ENCODE measurements at regions of chr14 and their contacts with region 1.

Region 1: DNA sequence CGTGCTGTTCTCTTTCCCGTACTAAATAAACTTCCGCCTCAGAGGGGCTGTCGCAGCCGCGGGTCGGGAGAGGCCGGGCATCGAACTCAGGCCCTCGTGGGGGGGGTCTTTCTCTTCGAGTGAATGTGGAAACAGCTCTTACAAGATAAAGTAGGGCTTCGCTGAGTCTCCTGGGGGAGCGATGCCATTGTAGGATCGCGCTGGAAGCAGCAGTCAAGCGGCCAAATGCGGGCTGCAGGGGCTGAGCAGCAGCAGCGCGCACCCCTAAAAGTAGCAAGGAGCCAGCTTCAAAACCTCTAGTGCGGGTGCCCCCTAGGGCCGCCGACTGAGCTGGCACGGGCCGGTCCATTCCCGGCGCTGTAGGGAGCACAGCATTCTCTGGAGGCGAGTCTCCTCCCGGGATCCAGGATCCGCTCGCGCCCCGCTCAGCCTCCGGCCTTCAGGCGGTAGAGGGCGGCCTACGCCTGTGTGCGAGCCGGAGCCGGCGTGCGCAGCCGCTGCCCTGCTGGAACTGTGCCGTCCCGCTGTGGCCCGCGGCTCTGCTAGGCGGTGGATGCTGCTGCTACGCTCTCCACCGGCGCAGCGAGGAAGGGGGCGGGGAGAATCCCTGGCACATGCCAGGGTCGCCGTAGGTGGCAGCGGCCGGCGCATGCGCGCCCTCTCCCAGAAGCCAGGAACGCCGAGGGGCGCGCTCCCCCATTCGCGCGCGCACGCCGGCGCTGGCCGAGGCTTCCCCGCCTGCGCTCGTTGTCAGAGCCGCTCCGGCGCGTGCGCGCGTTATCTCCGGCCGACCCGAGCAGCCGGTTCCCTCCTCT is at the start of gene FUT8:
- DNase-seq: peak; percentile 87 to 98 (median 96)
- ATAC-seq: peak; percentile 88
- H3K4me3 ChIP-seq: peak within 1 kb of the TSS; percentile 95 to 98
- H3K4me3 Mint-ChIP-seq: peak within 1 kb of the TSS; percentile 99
- H3K27ac ChIP-seq: peak within 1 kb of the TSS; percentile 75 to 86
- H3K27ac Mint-ChIP-seq: peak within 1 kb of the TSS; percentile 98
- H3K4me1 ChIP-seq: peaks cover 11% of the 10 kb centered on the region
- H3K4me1 Mint-ChIP-seq: peaks cover 43% of the 10 kb centered on the region
- H3K27me3 ChIP-seq: no peaks in the 10 kb centered on the region
- H3K27me3 Mint-ChIP-seq: no peaks in the 10 kb centered on the region
- CTCF ChIP-seq: peak; percentile 43
- total RNA-seq, gene FUT8: 38.3 to 38.5 TPM

Region 2: DNA sequence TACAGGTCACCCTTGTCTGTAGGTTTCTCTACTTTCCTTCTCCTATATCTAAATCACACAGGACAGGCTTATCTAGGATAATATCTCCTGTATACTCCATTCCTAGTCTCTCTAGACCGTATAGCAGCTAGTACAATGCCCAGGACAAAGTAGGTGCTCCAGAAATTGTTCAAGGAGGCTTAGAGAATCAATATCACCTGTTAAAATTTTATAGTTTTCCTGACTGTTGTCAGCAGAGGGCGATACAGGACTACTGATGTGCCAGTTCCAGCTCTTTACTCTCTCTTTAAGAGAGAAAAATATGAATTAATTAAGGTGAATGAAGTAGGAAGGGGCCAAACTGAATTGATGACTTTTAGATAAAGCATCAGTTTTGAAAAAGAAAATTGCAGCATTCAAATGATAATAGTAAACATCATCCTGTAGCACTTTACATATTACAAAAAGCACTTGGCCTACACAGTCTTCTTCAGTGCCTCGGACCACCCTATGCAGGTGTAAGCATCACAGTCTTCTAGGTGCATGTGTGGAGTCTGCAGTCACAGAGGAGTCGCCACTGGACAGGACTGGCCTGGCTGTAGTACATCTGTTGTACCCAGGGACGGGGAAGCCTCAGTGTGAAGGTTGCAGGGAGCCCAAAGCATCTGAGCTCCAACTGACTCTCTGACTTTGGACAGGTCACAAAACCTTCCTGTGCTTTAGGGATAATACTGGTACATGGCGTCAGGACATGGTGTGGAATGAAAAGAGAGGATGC is 248.0 kb before region 1 on chr14:
- CTCF ChIA-PET with region 1: interaction called, 44 read pairs
- POLR2A ChIA-PET with region 1: interaction called, 8 read pairs
- intact Hi-C with region 1: loop called (anchors 2 to 5 kb)
- DNase-seq: peak in 6 of 9 experiments; percentile 5 to 69 (median 37)
- ATAC-seq: peak; percentile 48
- H3K4me3 ChIP-seq: no peak overlapping the region
- H3K4me3 Mint-ChIP-seq: no peak overlapping the region
- H3K27ac ChIP-seq: no peak overlapping the region
- H3K27ac Mint-ChIP-seq: no peak overlapping the region
- H3K4me1 ChIP-seq: no peaks in the 10 kb centered on the region
- H3K4me1 Mint-ChIP-seq: no peaks in the 10 kb centered on the region
- H3K27me3 ChIP-seq: no peaks in the 10 kb centered on the region
- H3K27me3 Mint-ChIP-seq: no peaks in the 10 kb centered on the region
- CTCF ChIP-seq: peak; percentile 76

Region 3: GRCh38 chr14:65255536-65256461 is 156.4 kb before region 1 on chr14:
- CTCF ChIA-PET with region 1: interaction called, 29 read pairs
- POLR2A ChIA-PET with region 1: interaction called, 20 read pairs
- intact Hi-C with region 1: loop called in 1 of 2 experiments (anchors 1 kb)
- DNase-seq: peak in 5 of 9 experiments; percentile 11 to 48 (median 17)
- ATAC-seq: peak; percentile 54
- H3K4me3 ChIP-seq: no peak overlapping the region
- H3K4me3 Mint-ChIP-seq: no peak overlapping the region
- H3K27ac ChIP-seq: no peak overlapping the region
- H3K27ac Mint-ChIP-seq: no peak overlapping the region
- H3K4me1 ChIP-seq: peaks cover 7% of the 10 kb centered on the region
- H3K4me1 Mint-ChIP-seq: peaks cover 30% of the 10 kb centered on the region
- H3K27me3 ChIP-seq: no peaks in the 10 kb centered on the region
- H3K27me3 Mint-ChIP-seq: no peaks in the 10 kb centered on the region
- CTCF ChIP-seq: no peak

Region 4: DNA sequence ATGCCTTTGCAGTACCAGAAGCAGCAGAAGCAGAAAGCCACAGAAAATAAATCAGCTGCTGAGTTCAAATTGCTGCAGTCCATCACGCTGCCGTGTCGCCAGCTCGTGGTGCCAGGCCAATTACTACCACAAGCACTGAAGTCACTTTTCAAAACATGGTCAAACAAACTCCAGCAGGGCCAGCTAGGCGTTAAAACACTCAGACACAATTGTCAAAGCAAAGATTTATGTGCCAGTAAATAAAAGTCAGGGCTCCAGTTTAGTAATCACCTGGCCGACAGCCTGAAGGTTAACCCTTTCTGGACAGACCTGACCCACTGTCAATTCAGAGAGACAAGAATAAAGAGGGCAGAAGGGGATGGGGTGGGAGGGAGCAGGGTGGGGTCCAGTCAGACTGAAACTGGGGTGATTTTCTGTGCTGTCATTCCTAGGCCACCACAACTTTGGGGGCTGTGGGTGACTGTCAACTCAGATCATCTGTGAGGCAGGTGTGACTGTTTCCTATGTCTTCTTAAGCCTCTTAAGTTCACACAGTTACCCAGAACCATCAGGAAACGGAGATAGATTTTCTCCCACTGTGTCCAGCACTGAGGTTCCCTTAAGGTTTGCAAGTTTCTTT is 109.6 kb before region 1 on chr14:
- CTCF ChIA-PET with region 1: no interaction called
- POLR2A ChIA-PET with region 1: interaction called, 13 read pairs
- intact Hi-C with region 1: no loop called
- DNase-seq: peak in 2 of 9 experiments; percentile 29 to 50
- ATAC-seq: peak; percentile 64
- H3K4me3 ChIP-seq: no peak overlapping the region
- H3K4me3 Mint-ChIP-seq: peak overlapping the region; percentile 37
- H3K27ac ChIP-seq: no peak overlapping the region
- H3K27ac Mint-ChIP-seq: peak overlapping the region; percentile 77
- H3K4me1 ChIP-seq: peaks cover 37% of the 10 kb centered on the region
- H3K4me1 Mint-ChIP-seq: peaks cover 62% of the 10 kb centered on the region
- H3K27me3 ChIP-seq: no peaks in the 10 kb centered on the region
- H3K27me3 Mint-ChIP-seq: no peaks in the 10 kb centered on the region
- CTCF ChIP-seq: no peak

Region 5: GRCh38 chr14:65824285-65824977 is 412.2 kb after region 1 on chr14:
- CTCF ChIA-PET with region 1: interaction called, 63 read pairs
- POLR2A ChIA-PET with region 1: interaction called, 4 read pairs
- intact Hi-C with region 1: loop called (anchors 1 to 5 kb)
- DNase-seq: peak; percentile 27 to 80 (median 59)
- ATAC-seq: peak; percentile 98
- H3K4me3 ChIP-seq: no peak overlapping the region
- H3K4me3 Mint-ChIP-seq: no peak overlapping the region
- H3K27ac ChIP-seq: no peak overlapping the region
- H3K27ac Mint-ChIP-seq: no peak overlapping the region
- H3K4me1 ChIP-seq: peaks cover 4% of the 10 kb centered on the region
- H3K4me1 Mint-ChIP-seq: peaks cover 15% of the 10 kb centered on the region
- H3K27me3 ChIP-seq: no peaks in the 10 kb centered on the region
- H3K27me3 Mint-ChIP-seq: no peaks in the 10 kb centered on the region
- CTCF ChIP-seq: peak; percentile 96

Region 6: DNA sequence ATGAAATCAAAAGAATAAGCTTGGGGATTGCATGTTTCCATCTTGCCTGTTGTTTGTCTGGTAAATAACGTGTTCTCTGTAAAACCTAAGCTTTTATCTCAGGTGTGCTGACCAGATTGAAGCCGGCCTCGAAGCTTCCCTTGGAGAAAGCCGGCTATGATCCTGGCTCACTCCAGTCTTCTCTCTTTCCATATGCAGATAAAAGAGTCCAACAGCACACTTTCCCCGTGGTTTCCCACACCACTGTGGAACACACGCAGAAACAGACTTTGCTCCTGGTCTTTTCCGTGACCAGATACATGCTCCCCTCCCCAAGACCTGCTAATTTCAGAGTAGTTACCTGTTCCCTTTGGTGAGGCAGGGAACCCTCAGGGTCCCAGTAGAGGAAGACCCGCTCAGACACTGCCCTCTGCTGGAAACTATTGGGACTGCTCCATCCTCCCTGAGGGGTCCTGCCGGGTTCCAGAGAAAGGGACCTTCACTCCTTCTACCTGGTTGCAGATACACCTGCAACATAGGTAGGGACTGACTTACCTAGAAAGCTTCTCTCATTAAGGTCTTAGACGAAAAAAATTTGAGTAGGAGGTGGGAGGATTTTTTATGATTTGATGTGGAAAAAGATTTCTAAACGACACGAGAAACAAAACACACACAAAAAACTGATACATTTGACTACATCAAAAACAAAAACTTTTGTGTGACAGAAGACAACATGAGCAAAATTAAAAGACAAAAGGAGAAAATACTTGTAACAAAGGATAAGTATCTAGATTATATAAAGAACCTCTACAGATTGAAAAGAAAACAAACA is 658.5 kb after region 1 on chr14:
- CTCF ChIA-PET with region 1: interaction called, 122 read pairs
- POLR2A ChIA-PET with region 1: interaction called, 4 read pairs
- intact Hi-C with region 1: loop called (anchors 1 to 2 kb)
- DNase-seq: peak; percentile 47 to 86 (median 73)
- ATAC-seq: peak; percentile 89
- H3K4me3 ChIP-seq: no peak overlapping the region
- H3K4me3 Mint-ChIP-seq: no peak overlapping the region
- H3K27ac ChIP-seq: no peak overlapping the region
- H3K27ac Mint-ChIP-seq: no peak overlapping the region
- H3K4me1 ChIP-seq: no peaks in the 10 kb centered on the region
- H3K4me1 Mint-ChIP-seq: peaks cover 2% of the 10 kb centered on the region
- H3K27me3 ChIP-seq: no peaks in the 10 kb centered on the region
- H3K27me3 Mint-ChIP-seq: no peaks in the 10 kb centered on the region
- CTCF ChIP-seq: peak; percentile 99

Region 7: GRCh38 chr14:67240978-67241414 is 1828.8 kb after region 1 on chr14:
- CTCF ChIA-PET with region 1: no interaction called
- POLR2A ChIA-PET with region 1: no interaction called
- intact Hi-C with region 1: loop called in 1 of 2 experiments (anchors 2 kb)
- DNase-seq: peak; percentile 81 to 96 (median 91)
- ATAC-seq: peak; percentile 93
- H3K4me3 ChIP-seq: peak overlapping the region; percentile 65 to 76
- H3K4me3 Mint-ChIP-seq: peak overlapping the region; percentile 91
- H3K27ac ChIP-seq: peak overlapping the region; percentile 62
- H3K27ac Mint-ChIP-seq: peak overlapping the region; percentile 82
- H3K4me1 ChIP-seq: peaks cover 14% of the 10 kb centered on the region
- H3K4me1 Mint-ChIP-seq: peaks cover 29% of the 10 kb centered on the region
- H3K27me3 ChIP-seq: no peaks in the 10 kb centered on the region
- H3K27me3 Mint-ChIP-seq: no peaks in the 10 kb centered on the region
- CTCF ChIP-seq: no peak

Measured in CD8-positive, alpha-beta T cell (primary cell).